H1 (cell line): ENCODE measurements at regions of chr6 and their contacts with region 1.

Region 1: DNA sequence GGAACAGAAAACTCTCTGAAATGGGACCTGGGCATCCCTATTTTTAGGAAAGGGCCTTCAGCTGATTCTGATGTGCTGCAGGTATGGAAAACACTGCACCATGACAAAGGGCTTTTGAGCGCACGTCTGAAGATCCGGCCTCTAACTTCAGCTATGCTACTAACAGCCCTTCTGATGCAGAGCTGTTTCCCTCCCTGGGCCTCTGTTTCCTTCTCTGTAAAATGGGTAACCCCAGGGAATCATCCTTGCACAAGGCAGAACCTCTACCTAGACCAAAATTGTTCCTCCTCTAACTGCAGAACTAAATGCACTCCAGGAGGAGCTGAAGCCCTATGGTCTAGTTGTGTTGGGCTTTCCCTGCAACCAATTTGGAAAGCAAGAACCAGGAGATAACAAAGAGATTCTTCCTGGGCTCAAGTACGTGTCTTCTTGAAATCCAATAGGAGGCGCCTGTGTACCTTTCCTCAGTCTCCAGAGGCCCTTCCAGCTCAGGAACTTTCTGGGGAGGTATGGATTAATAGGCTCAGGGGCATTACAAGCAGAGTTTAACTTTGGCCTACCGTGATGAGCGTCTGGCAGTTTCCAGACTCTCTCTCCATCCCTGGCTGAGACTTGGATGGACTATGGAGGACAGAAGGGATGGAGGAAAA is 5.9 kb downstream of the GPX5 start:
- DNase-seq: no peak
- H3K4me3 ChIP-seq: no peak overlapping the region
- H3K27ac ChIP-seq: no peak overlapping the region
- H3K4me1 ChIP-seq: peaks cover 0 to 8% (median 2%) of the 10 kb centered on the region in 4 experiments; a peak in 3 of 7 replicates
- H3K27me3 ChIP-seq: peaks cover 0 to 1% (median 0%) of the 10 kb centered on the region in 4 experiments; a peak in 1 of 7 replicates
- CTCF ChIP-seq: peak in 2 of 3 experiments; percentile 52 to 68; a peak in 2 of 4 replicates
- EP300 ChIP-seq: no peak
- POLR2A ChIP-seq: no peak
- RAD21 ChIP-seq: peak; percentile 73 to 75

Region 2: GRCh38 chr6:28468056-28468455 is 63.5 kb before region 1 on chr6:
- CTCF ChIA-PET with region 1: interaction called, 11 read pairs
- POLR2A ChIA-PET with region 1: no interaction called
- DNase-seq: no peak
- H3K4me3 ChIP-seq: no peak overlapping the region
- H3K27ac ChIP-seq: no peak overlapping the region
- H3K4me1 ChIP-seq: no peaks in the 10 kb centered on the region
- H3K27me3 ChIP-seq: no peaks in the 10 kb centered on the region
- CTCF ChIP-seq: no peak
- EP300 ChIP-seq: no peak
- POLR2A ChIP-seq: no peak
- RAD21 ChIP-seq: no peak

Region 3: GRCh38 chr6:28474441-28475219 is 57.0 kb before region 1 on chr6:
- CTCF ChIA-PET with region 1: interaction called, 11 read pairs
- POLR2A ChIA-PET with region 1: no interaction called
- DNase-seq: peak; percentile 54
- H3K4me3 ChIP-seq: peak overlapping the region; percentile 72 to 88 (median 77)
- H3K27ac ChIP-seq: no peak overlapping the region
- H3K4me1 ChIP-seq: no peaks in the 10 kb centered on the region
- H3K27me3 ChIP-seq: peaks cover 0 to 2% (median 0%) of the 10 kb centered on the region in 4 experiments; a peak in 1 of 7 replicates
- CTCF ChIP-seq: no peak
- EP300 ChIP-seq: no peak
- POLR2A ChIP-seq: no peak
- RAD21 ChIP-seq: no peak

Region 4: GRCh38 chr6:28511628-28512300 is 19.8 kb before region 1 on chr6:
- CTCF ChIA-PET with region 1: interaction called, 33 read pairs
- POLR2A ChIA-PET with region 1: interaction called, 3 read pairs
- DNase-seq: no peak
- H3K4me3 ChIP-seq: no peak overlapping the region
- H3K27ac ChIP-seq: no peak overlapping the region
- H3K4me1 ChIP-seq: peaks cover 0 to 6% (median 2%) of the 10 kb centered on the region in 4 experiments; a peak in 4 of 7 replicates
- H3K27me3 ChIP-seq: no peaks in the 10 kb centered on the region; a peak in 2 of 7 replicates
- CTCF ChIP-seq: no peak
- EP300 ChIP-seq: no peak
- POLR2A ChIP-seq: no peak
- RAD21 ChIP-seq: no peak

Region 5: DNA sequence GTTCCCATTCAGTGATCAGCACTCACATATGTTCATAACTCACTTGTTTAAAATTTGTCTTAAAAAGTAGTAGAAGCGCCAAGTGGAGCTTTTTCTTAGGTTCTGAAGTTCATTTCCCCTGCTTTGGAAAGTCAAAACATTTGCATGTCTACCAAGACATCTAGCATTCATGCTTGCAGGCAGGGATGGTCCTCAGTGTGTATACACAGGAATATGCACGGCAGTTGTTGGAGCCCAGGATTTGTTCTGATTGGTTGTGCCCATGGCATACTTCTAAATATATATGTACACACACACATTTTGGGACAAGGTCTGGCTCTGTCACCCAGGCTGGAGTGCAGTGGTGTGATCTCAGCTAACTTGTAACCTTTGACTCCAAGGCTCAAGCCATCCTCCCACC is 13.6 kb before region 1 on chr6:
- CTCF ChIA-PET with region 1: interaction called, 33 read pairs
- POLR2A ChIA-PET with region 1: interaction called, 3 read pairs
- DNase-seq: no peak
- H3K4me3 ChIP-seq: no peak overlapping the region
- H3K27ac ChIP-seq: no peak overlapping the region
- H3K4me1 ChIP-seq: peaks cover 0 to 3% (median 0%) of the 10 kb centered on the region in 4 experiments; a peak in 2 of 7 replicates
- H3K27me3 ChIP-seq: no peaks in the 10 kb centered on the region; a peak in 2 of 7 replicates
- CTCF ChIP-seq: no peak
- EP300 ChIP-seq: no peak
- POLR2A ChIP-seq: no peak
- RAD21 ChIP-seq: no peak

Region 6: DNA sequence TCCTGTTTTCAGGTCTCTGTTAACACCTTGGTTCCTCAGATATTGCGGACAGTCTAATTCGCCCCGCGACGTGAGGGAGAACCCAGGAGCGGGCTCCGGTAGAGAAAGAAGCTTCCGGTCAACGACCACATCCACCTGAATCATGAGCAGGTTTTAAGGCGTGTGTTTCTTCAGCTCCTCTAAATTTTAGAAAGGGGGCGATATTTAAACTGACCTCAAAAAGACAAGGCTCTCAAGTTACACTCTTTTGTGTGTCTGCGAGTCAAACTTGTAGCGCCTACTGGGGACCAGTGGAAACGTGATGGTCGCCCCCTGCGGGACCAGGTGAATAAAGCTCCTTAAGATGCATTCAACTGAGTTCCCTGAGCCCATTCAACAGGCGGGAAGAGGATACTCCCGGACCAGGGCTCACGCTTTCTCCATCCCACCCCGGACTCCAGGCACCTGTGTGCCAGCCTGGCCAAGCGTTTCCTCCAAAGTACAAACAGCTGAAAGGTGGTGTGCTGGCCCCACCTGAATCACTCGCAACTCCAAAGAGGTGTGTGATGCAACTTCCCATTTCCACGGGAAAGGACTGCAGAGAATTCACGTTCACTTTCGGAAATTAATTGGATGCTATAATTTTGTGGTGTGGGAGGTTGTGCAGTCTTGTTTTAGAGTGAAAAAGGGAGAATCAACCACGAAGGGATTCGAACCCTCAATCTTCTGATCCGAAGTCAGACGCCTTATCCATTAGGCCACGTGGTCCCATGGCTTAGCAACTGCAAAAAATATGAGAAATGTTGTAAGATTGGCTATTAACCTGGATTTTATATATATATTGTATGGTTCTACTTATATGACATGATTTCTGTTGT is 11.1 kb after region 1 on chr6:
- CTCF ChIA-PET with region 1: interaction called, 21 read pairs
- POLR2A ChIA-PET with region 1: interaction called, 5 read pairs
- DNase-seq: peak; percentile 88 to 94
- H3K4me3 ChIP-seq: peak overlapping the region; percentile 54 to 80 (median 74)
- H3K27ac ChIP-seq: peak overlapping the region; percentile 59; the same call in 1 of the 2 replicates
- H3K4me1 ChIP-seq: peaks cover 0 to 6% (median under 1%) of the 10 kb centered on the region in 4 experiments; a peak in 4 of 7 replicates
- H3K27me3 ChIP-seq: no peaks in the 10 kb centered on the region
- CTCF ChIP-seq: peak; percentile 71 to 98 (median 86)
- EP300 ChIP-seq: peak in 1 of 2 experiments; percentile 26; a peak in 1 of 3 replicates
- POLR2A ChIP-seq: peak; percentile 70 to 73
- RAD21 ChIP-seq: peak; percentile 58 to 68

Region 7: GRCh38 chr6:28643017-28643740 is 111.6 kb after region 1 on chr6:
- CTCF ChIA-PET with region 1: no interaction called
- POLR2A ChIA-PET with region 1: no interaction called
- DNase-seq: peak; percentile 70 to 83
- H3K4me3 ChIP-seq: peak overlapping the region; percentile 31 to 62 (median 45); a peak in 7 of 8 replicates
- H3K27ac ChIP-seq: no peak overlapping the region
- H3K4me1 ChIP-seq: no peaks in the 10 kb centered on the region
- H3K27me3 ChIP-seq: no peaks in the 10 kb centered on the region
- CTCF ChIP-seq: no peak
- EP300 ChIP-seq: no peak
- POLR2A ChIP-seq: no peak
- RAD21 ChIP-seq: no peak